ENCODE measurements at regions of chr17 and their contacts with region 1.

Region 1: GRCh38 chr17:76868176-76868668 is at the start of gene MGAT5B:
- DNase-seq: peak; percentile 61 to 97 (median 80)
- ATAC-seq: peak; percentile 97 to 99 (median 98)
- H3K4me3 ChIP-seq: peak within 1 kb of the TSS in 2 of 4 donors; percentile 31 to 35
- H3K27ac ChIP-seq: no peak within 1 kb of the TSS
- H3K4me1 ChIP-seq: no peaks in the 10 kb centered on the region
- H3K27me3 ChIP-seq: peaks cover 0 to 12% (median 2%) of the 10 kb centered on the region in 4 donors
- CTCF ChIP-seq: peak; percentile 67 to 84 (median 76)
- total RNA-seq, gene MGAT5B: 0.21 to 0.38 (median 0.25) TPM in 5 of 6 donors, not detected in the other

Region 2: DNA sequence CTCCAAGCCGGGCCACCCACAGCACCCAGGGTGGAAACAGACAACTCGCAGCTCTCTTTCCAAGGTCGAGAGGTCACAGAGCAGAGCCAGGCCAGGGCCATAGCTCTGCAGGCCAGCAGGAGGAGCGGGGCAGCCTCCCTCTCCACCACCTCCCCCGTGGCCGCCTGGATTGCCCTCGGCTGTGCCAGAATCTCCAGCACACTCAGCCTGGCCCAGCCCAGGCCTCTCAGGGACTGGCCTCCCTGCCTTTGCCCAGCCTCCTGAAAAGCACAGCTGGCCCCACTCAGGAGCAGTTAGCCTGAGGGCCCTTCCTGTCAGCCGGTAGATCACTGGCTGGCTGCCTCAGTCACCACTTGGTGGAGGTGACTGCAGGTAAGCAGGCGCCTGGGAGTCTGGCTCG is 186.7 kb after region 1 on chr17:
- intact Hi-C with region 1: loop called (anchors 5 to 10 kb)
- DNase-seq: no peak
- ATAC-seq: no peak
- H3K4me3 ChIP-seq: no peak overlapping the region
- H3K27ac ChIP-seq: no peak overlapping the region
- H3K4me1 ChIP-seq: no peaks in the 10 kb centered on the region
- H3K27me3 ChIP-seq: peaks cover 0 to 8% (median 0%) of the 10 kb centered on the region in 4 donors
- CTCF ChIP-seq: no peak

Region 3: DNA sequence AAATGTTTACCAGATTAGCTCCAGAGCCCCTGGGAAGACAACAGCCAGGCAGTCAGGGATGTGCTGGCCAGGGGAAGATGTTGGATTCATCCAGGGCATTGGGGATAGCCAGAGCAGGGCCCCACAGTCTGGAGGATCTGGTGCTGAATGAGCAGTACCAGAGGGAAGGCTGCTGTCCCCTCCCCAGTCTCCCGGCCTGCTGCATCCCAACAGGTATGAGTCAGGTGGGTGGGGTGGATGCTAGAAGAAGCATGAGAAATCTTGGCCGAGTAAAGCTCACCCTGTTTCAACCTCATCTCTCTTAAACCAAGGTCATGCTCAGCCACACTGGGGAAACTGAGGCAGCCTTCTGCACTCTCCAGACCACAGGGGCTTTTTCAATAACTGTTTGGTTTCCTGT is 200.7 kb after region 1 on chr17:
- intact Hi-C with region 1: loop called in 1 of 3 experiments (anchors 5 kb)
- DNase-seq: no peak
- ATAC-seq: no peak
- H3K4me3 ChIP-seq: no peak overlapping the region
- H3K27ac ChIP-seq: no peak overlapping the region
- H3K4me1 ChIP-seq: no peaks in the 10 kb centered on the region
- H3K27me3 ChIP-seq: no peaks in the 10 kb centered on the region
- CTCF ChIP-seq: no peak